ENCODE measurements at regions of chr6 and their contacts with region 1.

Region 1: GRCh38 chr6:30678964-30679726 is 6.3 kb upstream of the DHX16 start:
- DNase-seq: peak; percentile 93
- ATAC-seq: peak; percentile 87

Region 2: DNA sequence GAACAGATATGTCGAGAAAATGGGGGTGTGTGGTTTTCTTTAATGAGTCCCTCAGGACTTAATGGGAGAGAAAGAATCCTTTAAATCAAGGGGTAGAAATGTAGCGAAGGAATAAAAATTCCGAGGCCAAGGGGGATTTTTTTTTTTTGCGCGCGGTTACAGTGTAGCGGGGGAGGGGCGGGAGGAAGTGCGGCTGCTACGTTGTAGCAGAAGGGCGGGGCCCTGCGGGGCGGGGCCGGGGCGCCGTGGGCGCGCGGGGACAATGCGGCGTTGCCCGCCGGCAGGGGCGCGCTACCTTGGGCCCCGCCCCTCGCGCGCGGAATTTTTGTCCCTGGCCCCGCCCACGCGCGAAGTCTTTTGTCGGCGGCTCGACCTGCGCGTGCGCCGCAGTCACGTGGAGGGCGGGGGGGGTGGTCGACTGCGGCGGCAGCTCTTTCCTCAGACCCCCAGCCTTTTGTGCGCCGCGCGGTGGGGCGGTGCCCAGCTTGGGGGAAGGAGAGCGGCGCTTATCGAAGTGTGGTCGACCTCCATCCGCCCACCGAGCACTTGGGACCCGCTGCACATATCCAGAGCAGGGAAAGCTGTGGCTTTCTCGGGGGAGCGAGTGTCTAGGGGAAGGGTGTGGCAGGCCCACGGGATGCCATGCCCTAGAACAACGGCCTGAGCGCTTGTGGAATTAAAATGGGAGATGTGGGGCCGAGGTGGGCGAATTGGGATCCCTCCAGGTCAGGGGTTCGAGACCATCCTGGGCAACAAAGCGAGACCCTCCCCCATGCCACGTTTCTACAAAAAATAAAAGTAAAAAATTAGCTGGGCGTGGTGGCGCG is 42.3 kb after region 1 on chr6:
- intact Hi-C with region 1: loop called (anchors 2 kb)
- DNase-seq: peak; percentile 96
- ATAC-seq: peak; percentile 74

Measured in sciatic nerve (tissue), 2 donors.